ENCODE measurements at regions of chr1 and their contacts with region 1.

Region 1: GRCh38 chr1:184691719-184692324 is 62.8 kb downstream of the EDEM3 start:
- DNase-seq: no peak
- ATAC-seq: peak; percentile 60

Region 2: DNA sequence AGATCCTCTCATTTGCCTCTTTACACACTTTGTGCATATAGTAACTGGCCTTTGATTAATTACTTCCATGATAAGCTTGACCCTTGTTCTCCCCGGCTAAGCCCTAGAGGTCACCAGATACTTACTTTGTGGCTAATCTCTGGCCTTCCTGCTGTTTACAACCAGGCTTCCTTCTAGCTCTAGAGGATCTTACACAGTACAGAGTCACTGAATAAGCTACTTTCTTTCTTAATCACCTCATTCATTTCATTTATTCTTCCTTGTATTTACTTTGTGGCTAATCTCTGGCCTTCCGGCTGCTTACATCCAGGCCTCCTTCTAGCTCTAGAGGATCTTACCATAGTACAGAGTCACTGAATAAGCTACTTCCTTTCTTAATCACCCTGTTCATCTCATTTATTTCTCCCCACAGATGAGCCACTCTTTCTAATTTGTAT is 449.3 kb before region 1 on chr1:
- intact Hi-C with region 1: loop called (anchors 10 kb)
- DNase-seq: no peak
- ATAC-seq: peak; percentile 88

Region 3: DNA sequence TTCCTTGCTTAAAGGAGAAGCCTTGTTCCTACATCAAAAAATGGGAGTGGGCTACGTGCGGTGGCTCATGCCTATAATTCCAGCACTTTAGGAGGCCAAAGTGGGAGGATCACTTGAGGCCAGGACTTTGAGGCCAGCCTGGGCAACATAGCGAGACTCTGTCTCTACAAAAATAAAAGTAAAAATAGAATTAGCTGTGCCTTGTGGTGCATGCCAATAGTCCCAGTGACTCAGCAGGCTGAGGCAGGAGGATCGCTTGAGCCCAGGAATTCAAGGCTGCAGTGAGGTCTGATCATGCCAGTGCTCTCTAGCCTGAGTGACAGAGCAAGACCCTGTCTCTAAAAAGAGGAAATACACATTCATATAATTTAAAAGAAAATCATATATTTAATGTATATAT is 177.9 kb before region 1 on chr1:
- intact Hi-C with region 1: no loop called
- DNase-seq: peak; percentile 32
- ATAC-seq: peak; percentile 77

Region 4: GRCh38 chr1:184734980-184735379 is 43.2 kb after region 1 on chr1:
- intact Hi-C with region 1: no loop called
- DNase-seq: no peak
- ATAC-seq: no peak